CD8-positive, alpha-beta memory T cell (primary cell): ENCODE measurements at regions of chr11 and their contacts with region 1.

Region 1: GRCh38 chr11:207208-207862 is at the starts of genes BET1L and RIC8A:
- DNase-seq: peak; percentile 96 to 99 (median 97)
- H3K4me3 ChIP-seq: peak within 1 kb of the TSS; percentile 83
- H3K4me3 Mint-ChIP-seq: peak within 1 kb of the TSS; percentile 95 to 100 (median 98)
- H3K27ac ChIP-seq: peak within 1 kb of the TSS; percentile 93
- H3K27ac Mint-ChIP-seq: peak within 1 kb of the TSS; percentile 99 to 100 (median 100)
- H3K4me1 ChIP-seq: peaks cover 58% of the 10 kb centered on the region
- H3K4me1 Mint-ChIP-seq: peaks cover 48 to 76% (median 55%) of the 10 kb centered on the region in 3 donors
- H3K27me3 ChIP-seq: no peaks in the 10 kb centered on the region
- H3K27me3 Mint-ChIP-seq: peaks cover 0 to 8% of the 10 kb centered on the region in 2 donors
- total RNA-seq, gene BET1L: 36.1 to 38.5 TPM
- total RNA-seq, gene RIC8A: 137 to 139 TPM

Region 2: DNA sequence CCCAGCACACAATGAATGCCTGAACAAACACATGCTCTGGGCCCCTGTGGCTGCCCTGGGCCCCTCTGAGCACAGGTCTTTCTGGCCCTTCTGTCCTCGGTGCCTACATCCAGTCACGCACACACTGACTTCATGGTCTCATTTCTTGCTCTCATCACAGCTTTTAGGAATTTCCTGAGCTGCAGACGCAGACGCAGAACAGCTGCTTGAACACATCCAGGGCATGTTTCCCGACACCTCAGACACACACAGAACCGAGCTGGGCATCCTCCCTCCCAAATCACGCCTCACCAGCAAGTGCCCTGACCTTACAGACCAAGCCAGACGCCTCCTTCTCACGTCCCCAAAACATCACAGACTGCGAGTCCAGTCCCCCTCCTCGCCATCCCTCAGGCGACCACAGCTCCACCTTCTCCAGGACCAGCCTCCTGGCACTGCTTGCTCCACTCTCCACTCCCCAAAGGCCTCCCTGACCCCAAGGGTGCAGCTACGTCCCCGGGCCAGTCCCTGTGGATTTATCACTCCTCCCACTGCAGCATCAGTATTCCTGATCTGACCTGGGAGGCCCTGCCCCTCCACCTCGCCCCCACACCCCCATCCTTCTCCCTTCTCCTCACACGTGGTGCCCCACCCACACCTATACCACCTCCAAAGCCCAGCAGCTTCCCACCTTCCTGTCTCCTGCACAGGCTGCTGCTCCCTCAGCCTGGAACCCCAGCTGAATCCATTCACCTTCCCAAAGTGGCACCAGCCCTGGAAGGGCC is 15.9 kb after region 1 on chr11:
- CTCF ChIA-PET with region 1: no interaction called
- POLR2A ChIA-PET with region 1: no interaction called
- DNase-seq: no peak
- H3K4me3 ChIP-seq: no peak overlapping the region
- H3K4me3 Mint-ChIP-seq: peak overlapping the region in 1 of 7 donors; percentile 2
- H3K27ac ChIP-seq: no peak overlapping the region
- H3K27ac Mint-ChIP-seq: peak overlapping the region in 4 of 8 donors; percentile 5 to 89 (median 62)
- H3K4me1 ChIP-seq: no peaks in the 10 kb centered on the region
- H3K4me1 Mint-ChIP-seq: peaks cover 0 to 5% (median 1%) of the 10 kb centered on the region in 3 donors
- H3K27me3 ChIP-seq: no peaks in the 10 kb centered on the region
- H3K27me3 Mint-ChIP-seq: no peaks in the 10 kb centered on the region

Region 3: GRCh38 chr11:236774-237767 is 29.7 kb after region 1 on chr11 and contains the start of gene PSMD13:
- CTCF ChIA-PET with region 1: interaction called, 6 read pairs
- POLR2A ChIA-PET with region 1: interaction called, 17 read pairs
- DNase-seq: peak; percentile 83 to 91 (median 88)
- H3K4me3 ChIP-seq: peak within 1 kb of the TSS; percentile 95
- H3K4me3 Mint-ChIP-seq: peak within 1 kb of the TSS; percentile 95 to 100 (median 97)
- H3K27ac ChIP-seq: peak within 1 kb of the TSS; percentile 100
- H3K27ac Mint-ChIP-seq: peak within 1 kb of the TSS; percentile 98 to 100 (median 100)
- H3K4me1 ChIP-seq: peaks cover 24% of the 10 kb centered on the region
- H3K4me1 Mint-ChIP-seq: peaks cover 39 to 71% (median 53%) of the 10 kb centered on the region in 3 donors
- H3K27me3 ChIP-seq: no peaks in the 10 kb centered on the region
- H3K27me3 Mint-ChIP-seq: peaks cover 0 to 4% of the 10 kb centered on the region in 2 donors
- total RNA-seq, gene PSMD13: 235 to 237 TPM

Region 4: DNA sequence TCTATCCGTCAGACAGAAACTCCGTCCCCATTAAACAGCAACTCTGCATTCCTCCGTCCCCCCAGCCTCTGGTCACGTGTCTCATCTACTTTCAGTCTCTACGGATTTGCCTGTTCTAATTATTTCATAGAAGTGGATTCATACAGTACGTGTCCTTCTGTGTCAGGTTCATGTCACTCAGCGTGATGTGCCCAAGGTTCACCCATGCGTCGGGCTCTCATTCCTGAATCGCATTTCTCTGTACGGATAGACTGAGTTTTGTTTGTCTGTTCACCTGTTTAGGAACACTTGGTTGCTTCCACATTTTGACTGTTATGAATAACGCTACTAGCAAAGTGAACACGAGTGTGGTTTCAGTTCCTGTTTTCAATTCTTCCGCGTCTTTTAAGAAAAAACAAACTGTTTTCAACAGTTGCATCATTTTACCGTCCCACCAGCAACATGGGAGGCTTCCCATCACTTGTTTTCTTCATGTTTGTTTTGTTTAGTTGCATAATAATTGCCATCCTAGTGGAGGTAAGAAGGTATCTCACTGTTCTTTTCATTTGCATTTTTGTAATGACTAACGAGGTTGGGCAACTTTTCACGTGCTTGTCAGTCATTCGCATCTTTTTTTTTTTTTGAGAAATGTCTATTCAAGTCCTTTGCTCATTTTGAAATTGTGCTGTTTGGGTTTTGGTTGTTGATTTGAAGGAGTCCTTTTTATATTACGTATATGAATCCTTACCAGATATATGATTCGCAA is 62.0 kb after region 1 on chr11:
- CTCF ChIA-PET with region 1: interaction called, 4 read pairs
- POLR2A ChIA-PET with region 1: interaction called, 20 read pairs
- DNase-seq: peak; percentile 24 to 88 (median 72)
- H3K4me3 ChIP-seq: peak overlapping the region; percentile 49
- H3K4me3 Mint-ChIP-seq: peak overlapping the region; percentile 84 to 94 (median 90)
- H3K27ac ChIP-seq: peak overlapping the region; percentile 78
- H3K27ac Mint-ChIP-seq: peak overlapping the region; percentile 89 to 100 (median 96)
- H3K4me1 ChIP-seq: peaks cover 22% of the 10 kb centered on the region
- H3K4me1 Mint-ChIP-seq: peaks cover 30 to 43% (median 31%) of the 10 kb centered on the region in 3 donors
- H3K27me3 ChIP-seq: no peaks in the 10 kb centered on the region
- H3K27me3 Mint-ChIP-seq: peaks cover 0 to 2% of the 10 kb centered on the region in 2 donors

Region 5: DNA sequence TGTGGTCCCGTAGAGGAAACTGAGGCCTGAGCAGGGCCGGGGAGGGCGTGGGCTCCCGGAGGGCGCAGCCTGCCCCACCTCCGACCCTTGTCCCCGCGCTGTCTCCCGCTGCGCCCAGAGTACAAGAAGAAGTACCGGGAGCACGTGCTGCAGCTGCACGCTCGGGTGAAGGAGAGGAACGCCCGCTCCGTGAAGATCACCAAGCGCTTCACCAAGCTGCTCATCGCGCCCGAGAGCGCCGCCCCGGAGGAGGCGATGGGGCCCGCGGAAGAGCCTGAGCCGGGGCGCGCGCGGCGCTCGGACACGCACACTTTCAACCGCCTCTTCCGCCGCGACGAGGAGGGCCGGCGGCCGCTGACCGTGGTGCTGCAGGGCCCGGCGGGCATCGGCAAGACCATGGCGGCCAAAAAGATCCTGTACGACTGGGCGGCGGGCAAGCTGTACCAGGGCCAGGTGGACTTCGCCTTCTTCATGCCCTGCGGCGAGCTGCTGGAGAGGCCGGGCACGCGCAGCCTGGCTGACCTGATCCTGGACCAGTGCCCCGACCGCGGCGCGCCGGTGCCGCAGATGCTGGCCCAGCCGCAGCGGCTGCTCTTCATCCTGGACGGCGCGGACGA is 72.7 kb after region 1 on chr11:
- CTCF ChIA-PET with region 1: interaction called, 8 read pairs
- POLR2A ChIA-PET with region 1: interaction called, 12 read pairs
- DNase-seq: peak in 2 of 5 donors; percentile 47 to 71
- H3K4me3 ChIP-seq: peak overlapping the region; percentile 50
- H3K4me3 Mint-ChIP-seq: peak overlapping the region; percentile 77 to 91 (median 84)
- H3K27ac ChIP-seq: no peak overlapping the region
- H3K27ac Mint-ChIP-seq: peak overlapping the region in 5 of 8 donors; percentile 19 to 85 (median 54)
- H3K4me1 ChIP-seq: peaks cover 47% of the 10 kb centered on the region
- H3K4me1 Mint-ChIP-seq: peaks cover 42 to 58% (median 50%) of the 10 kb centered on the region in 3 donors
- H3K27me3 ChIP-seq: no peaks in the 10 kb centered on the region
- H3K27me3 Mint-ChIP-seq: no peaks in the 10 kb centered on the region

Region 6: GRCh38 chr11:288328-289144 is 81.2 kb after region 1 on chr11 and contains the start of gene PGGHG:
- CTCF ChIA-PET with region 1: interaction called, 6 read pairs
- POLR2A ChIA-PET with region 1: interaction called, 14 read pairs
- DNase-seq: peak; percentile 55 to 71 (median 67)
- H3K4me3 ChIP-seq: peak within 1 kb of the TSS; percentile 74
- H3K4me3 Mint-ChIP-seq: peak within 1 kb of the TSS; percentile 94 to 99 (median 98)
- H3K27ac ChIP-seq: peak within 1 kb of the TSS; percentile 79
- H3K27ac Mint-ChIP-seq: peak within 1 kb of the TSS; percentile 93 to 99 (median 97)
- H3K4me1 ChIP-seq: peaks cover 27% of the 10 kb centered on the region
- H3K4me1 Mint-ChIP-seq: peaks cover 29 to 59% (median 35%) of the 10 kb centered on the region in 3 donors
- H3K27me3 ChIP-seq: no peaks in the 10 kb centered on the region
- H3K27me3 Mint-ChIP-seq: peaks cover 0 to 9% of the 10 kb centered on the region in 2 donors
- total RNA-seq, gene PGGHG: 81.0 to 81.2 TPM

Region 7: GRCh38 chr11:335779-336658 is 128.7 kb after region 1 on chr11:
- CTCF ChIA-PET with region 1: no interaction called
- POLR2A ChIA-PET with region 1: no interaction called
- DNase-seq: no peak
- H3K4me3 ChIP-seq: no peak overlapping the region
- H3K4me3 Mint-ChIP-seq: no peak overlapping the region
- H3K27ac ChIP-seq: no peak overlapping the region
- H3K27ac Mint-ChIP-seq: peak overlapping the region in 3 of 8 donors; percentile 7 to 59 (median 58)
- H3K4me1 ChIP-seq: peaks cover 25% of the 10 kb centered on the region
- H3K4me1 Mint-ChIP-seq: peaks cover 23 to 29% (median 26%) of the 10 kb centered on the region in 3 donors
- H3K27me3 ChIP-seq: no peaks in the 10 kb centered on the region
- H3K27me3 Mint-ChIP-seq: peaks cover 0 to 1% of the 10 kb centered on the region in 2 donors

Region 8: DNA sequence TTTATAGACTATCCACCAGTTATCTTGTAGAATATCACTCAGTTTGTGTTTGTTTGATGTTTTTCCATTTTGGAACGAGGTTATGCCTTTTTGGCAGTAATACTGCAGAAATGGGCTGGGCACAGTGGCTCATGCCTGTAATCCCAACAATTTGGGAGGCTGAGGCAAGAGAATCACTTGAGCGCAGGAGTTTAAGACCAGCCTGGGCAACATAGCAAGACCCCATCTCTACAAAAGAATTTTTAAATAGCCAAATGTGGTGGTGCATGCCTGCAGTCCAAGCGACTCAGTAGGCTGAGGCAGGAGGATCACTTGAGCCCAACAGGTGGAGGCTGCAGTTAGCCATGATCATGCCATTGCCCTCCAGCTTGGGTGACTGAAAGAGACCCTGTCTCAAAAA is 139.2 kb after region 1 on chr11:
- CTCF ChIA-PET with region 1: no interaction called
- POLR2A ChIA-PET with region 1: no interaction called
- DNase-seq: no peak
- H3K4me3 ChIP-seq: no peak overlapping the region
- H3K4me3 Mint-ChIP-seq: no peak overlapping the region
- H3K27ac ChIP-seq: no peak overlapping the region
- H3K27ac Mint-ChIP-seq: peak overlapping the region in 1 of 8 donors; percentile 32
- H3K4me1 ChIP-seq: peaks cover 18% of the 10 kb centered on the region
- H3K4me1 Mint-ChIP-seq: peaks cover 18 to 21% (median 18%) of the 10 kb centered on the region in 3 donors
- H3K27me3 ChIP-seq: no peaks in the 10 kb centered on the region
- H3K27me3 Mint-ChIP-seq: peaks cover 0 to 1% of the 10 kb centered on the region in 2 donors

Region 9: DNA sequence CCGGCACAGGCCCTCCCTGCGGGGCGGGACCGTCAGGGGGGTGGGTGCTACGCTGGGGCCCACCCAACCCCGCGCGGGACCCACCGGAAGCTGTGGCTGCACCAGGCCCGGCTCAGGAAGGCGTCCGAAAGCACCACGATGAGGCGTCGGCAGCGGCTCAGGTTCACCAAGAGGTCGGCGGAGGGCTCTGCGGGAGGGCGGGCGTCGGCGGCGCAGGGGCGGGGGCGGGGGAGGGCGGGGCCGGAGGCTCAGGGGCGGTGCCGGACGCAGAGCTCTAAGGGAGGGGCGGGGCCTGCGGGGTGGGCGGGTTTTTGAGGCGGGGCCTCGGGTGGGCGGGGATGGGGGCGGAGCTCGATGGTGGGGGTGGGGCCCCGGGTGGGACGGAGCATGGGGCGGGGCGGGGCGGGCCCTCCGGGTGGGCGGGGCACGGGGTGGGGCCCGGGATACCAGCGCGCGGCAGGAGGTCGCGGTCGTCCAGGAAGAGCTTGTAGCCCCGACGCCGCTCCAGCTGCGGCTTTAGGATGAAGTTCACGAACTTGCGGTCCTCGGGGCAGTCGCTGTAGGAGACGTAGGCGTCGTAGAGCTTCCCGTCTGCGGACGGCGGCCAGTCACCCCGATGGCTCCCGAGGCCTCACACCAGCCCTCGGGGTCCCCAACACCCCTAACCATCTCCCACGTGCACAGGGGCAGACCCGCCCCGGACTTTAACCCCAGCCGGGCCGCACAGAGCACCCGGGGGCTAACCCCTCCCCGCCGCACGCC is 199.8 kb after region 1 on chr11:
- CTCF ChIA-PET with region 1: no interaction called
- POLR2A ChIA-PET with region 1: interaction called, 28 read pairs
- DNase-seq: peak; percentile 94 to 98 (median 96)
- H3K4me3 ChIP-seq: peak overlapping the region; percentile 43
- H3K4me3 Mint-ChIP-seq: peak overlapping the region in 6 of 7 donors; percentile 24 to 78 (median 35)
- H3K27ac ChIP-seq: peak overlapping the region; percentile 70
- H3K27ac Mint-ChIP-seq: peak overlapping the region; percentile 34 to 91 (median 74)
- H3K4me1 ChIP-seq: peaks cover 20% of the 10 kb centered on the region
- H3K4me1 Mint-ChIP-seq: peaks cover 0 to 32% (median 12%) of the 10 kb centered on the region in 3 donors
- H3K27me3 ChIP-seq: no peaks in the 10 kb centered on the region
- H3K27me3 Mint-ChIP-seq: no peaks in the 10 kb centered on the region

Region 10: GRCh38 chr11:506238-506994 is 299.1 kb after region 1 on chr11:
- CTCF ChIA-PET with region 1: no interaction called
- POLR2A ChIA-PET with region 1: interaction called, 18 read pairs
- DNase-seq: peak; percentile 96 to 98 (median 96)
- H3K4me3 ChIP-seq: peak overlapping the region; percentile 95
- H3K4me3 Mint-ChIP-seq: peak overlapping the region; percentile 89 to 100 (median 98)
- H3K27ac ChIP-seq: peak overlapping the region; percentile 100
- H3K27ac Mint-ChIP-seq: peak overlapping the region; percentile 97 to 100 (median 100)
- H3K4me1 ChIP-seq: peaks cover 31% of the 10 kb centered on the region
- H3K4me1 Mint-ChIP-seq: peaks cover 11 to 38% (median 21%) of the 10 kb centered on the region in 3 donors
- H3K27me3 ChIP-seq: no peaks in the 10 kb centered on the region
- H3K27me3 Mint-ChIP-seq: peaks cover 0 to 4% of the 10 kb centered on the region in 2 donors